ENCODE measurements at regions of chr11 and their contacts with region 1.

Region 1: GRCh38 chr11:102346748-102347461 is at the start of gene BIRC2:
- DNase-seq: peak; percentile 93 to 97
- ATAC-seq: peak; percentile 97 to 99 (median 98)
- H3K4me3 ChIP-seq: peak within 1 kb of the TSS; percentile 55 to 94 (median 86)
- H3K27ac ChIP-seq: peak within 1 kb of the TSS; percentile 93 to 99 (median 98)
- H3K4me1 ChIP-seq: peaks cover 0 to 38% (median 32%) of the 10 kb centered on the region in 9 donors
- H3K27me3 ChIP-seq: no peaks in the 10 kb centered on the region
- CTCF ChIP-seq: peak; percentile 34 to 87 (median 81)
- total RNA-seq, gene BIRC2: 25.4 to 39.7 (median 28.6) TPM

Region 2: GRCh38 chr11:101003468-101003867 is 1343.4 kb before region 1 on chr11:
- intact Hi-C with region 1: no loop called
- DNase-seq: no peak
- ATAC-seq: no peak
- H3K4me3 ChIP-seq: no peak overlapping the region
- H3K27ac ChIP-seq: no peak overlapping the region
- H3K4me1 ChIP-seq: no peaks in the 10 kb centered on the region
- H3K27me3 ChIP-seq: no peaks in the 10 kb centered on the region
- CTCF ChIP-seq: no peak

Region 3: GRCh38 chr11:102109896-102110760 is 236.8 kb before region 1 on chr11 and contains the start of gene YAP1:
- intact Hi-C with region 1: no loop called
- DNase-seq: peak; percentile 91
- ATAC-seq: peak; percentile 85 to 93 (median 90)
- H3K4me3 ChIP-seq: peak within 1 kb of the TSS; percentile 74 to 98 (median 89)
- H3K27ac ChIP-seq: peak within 1 kb of the TSS; percentile 94 to 99 (median 98)
- H3K4me1 ChIP-seq: peaks cover 0 to 39% (median 28%) of the 10 kb centered on the region in 9 donors
- H3K27me3 ChIP-seq: peaks cover 0 to 74% (median 0%) of the 10 kb centered on the region in 7 donors
- CTCF ChIP-seq: peak in 2 of 9 donors; percentile 3 to 12
- total RNA-seq, gene YAP1: 56.5 to 91.3 (median 68.7) TPM

Region 4: DNA sequence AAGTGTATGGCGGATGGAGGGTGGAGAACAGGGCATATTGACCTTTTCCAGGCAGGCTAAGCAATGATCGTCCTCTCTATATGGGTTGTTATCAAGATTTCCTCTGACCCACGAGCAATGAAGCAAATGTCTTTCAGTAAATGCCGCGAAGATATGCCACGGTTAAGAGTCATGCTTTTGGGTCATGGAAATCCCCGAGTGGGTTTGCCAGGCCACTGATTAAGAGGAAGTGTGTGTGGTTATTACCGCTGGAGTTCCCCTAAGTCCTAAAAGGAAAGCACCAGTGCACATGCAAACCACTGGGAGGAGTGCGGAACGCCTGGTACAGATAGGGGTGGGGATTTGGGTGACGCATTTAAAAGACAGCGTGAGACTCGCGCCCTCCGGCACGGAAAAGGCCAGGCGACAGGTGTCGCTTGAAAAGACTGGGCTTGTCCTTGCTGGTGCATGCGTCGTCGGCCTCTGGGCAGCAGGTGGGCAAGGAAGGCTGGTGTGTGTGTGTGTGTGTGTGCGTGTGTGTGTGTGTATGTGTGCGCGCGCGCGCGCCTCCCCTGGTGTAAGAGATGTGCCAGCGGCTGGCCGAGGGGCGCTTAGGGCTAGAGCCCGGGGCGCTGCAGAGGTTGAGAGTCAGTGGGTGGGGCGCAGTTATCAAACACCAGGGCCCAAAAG is 29.7 kb before region 1 on chr11 and contains the start of gene BIRC3:
- intact Hi-C with region 1: loop called in 1 of 10 experiments (anchors 2 kb)
- DNase-seq: peak; percentile 69 to 83
- ATAC-seq: peak; percentile 93 to 97 (median 96)
- H3K4me3 ChIP-seq: peak within 1 kb of the TSS in 9 of 10 donors; percentile 44 to 72 (median 59)
- H3K27ac ChIP-seq: peak within 1 kb of the TSS; percentile 32 to 85 (median 59)
- H3K4me1 ChIP-seq: peaks cover 0 to 69% (median 17%) of the 10 kb centered on the region in 9 donors
- H3K27me3 ChIP-seq: no peaks in the 10 kb centered on the region
- CTCF ChIP-seq: peak in 5 of 9 donors; percentile 33 to 52 (median 42)
- total RNA-seq, gene BIRC3: 1.5 to 16.5 (median 5.7) TPM

Region 5: DNA sequence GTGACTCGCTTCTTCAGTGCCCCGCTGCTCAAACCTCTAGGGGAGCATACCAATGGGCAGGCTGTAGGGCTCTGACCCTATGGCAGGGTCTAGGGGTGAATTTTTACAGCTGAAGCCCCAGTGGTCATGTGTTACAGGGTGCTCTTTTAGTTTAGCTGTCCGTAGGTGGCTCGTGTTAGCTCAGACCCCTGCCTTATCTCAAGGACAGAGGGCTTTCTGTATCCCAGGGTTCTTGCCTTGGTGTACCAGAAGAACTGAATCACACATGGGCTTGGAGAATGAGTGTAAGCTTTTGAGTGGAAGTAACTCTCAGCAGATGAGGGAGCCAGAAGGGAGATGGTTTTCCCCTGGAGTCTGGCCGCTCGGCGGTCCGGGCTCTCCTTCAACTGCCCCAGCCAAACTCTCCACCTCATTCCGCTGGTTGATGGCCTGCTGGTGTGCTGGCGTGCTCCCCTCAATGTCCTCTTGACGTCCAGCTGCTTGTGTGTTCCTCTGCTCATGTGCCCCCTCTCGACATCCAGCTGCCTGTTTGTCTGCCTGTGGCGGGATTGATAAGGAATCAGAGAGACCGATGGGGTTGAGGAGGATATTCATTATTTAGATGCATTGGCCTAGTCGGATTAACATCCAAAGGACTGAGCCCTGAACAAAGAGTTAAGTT is 37.6 kb after region 1 on chr11:
- intact Hi-C with region 1: loop called in 1 of 10 experiments (anchors 2 kb)
- DNase-seq: peak; percentile 36 to 48
- ATAC-seq: peak; percentile 73 to 89 (median 82)
- H3K4me3 ChIP-seq: no peak overlapping the region
- H3K27ac ChIP-seq: peak overlapping the region in 6 of 10 donors; percentile 6 to 47 (median 32)
- H3K4me1 ChIP-seq: peaks cover 0 to 34% (median 16%) of the 10 kb centered on the region in 9 donors
- H3K27me3 ChIP-seq: no peaks in the 10 kb centered on the region
- CTCF ChIP-seq: no peak

Region 6: DNA sequence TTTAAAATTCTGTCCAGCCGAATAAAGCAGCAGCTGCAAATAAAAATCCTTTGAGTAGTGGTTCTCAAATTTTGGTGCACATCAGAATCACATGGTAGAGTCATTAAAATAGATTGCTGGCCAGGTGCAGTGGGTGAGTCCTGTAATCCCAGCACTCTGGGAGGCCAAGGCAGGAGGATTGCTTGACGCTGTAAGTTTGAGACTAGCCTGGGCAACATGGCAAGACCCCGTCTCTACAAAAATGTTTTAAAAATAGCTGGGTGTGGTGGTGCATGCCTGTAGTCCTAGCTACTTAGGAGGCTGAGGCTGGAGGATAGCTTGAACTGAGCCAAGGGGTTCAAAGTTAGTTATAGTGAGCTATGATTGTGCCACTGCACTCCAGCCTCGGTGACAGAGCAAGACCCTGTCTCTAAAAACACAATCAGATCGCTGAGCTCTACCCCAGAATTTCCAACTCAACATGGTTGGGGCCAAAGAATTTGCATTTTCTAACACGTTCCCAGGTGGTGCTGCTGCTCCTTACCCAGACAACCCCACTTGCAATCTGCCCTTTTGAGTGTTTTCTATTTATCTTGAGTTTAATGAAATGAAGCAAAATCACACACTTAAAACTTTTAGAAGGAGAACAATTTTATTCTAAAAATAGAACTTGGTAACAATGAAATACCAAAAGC is 49.0 kb after region 1 on chr11:
- intact Hi-C with region 1: no loop called
- DNase-seq: no peak
- ATAC-seq: no peak
- H3K4me3 ChIP-seq: no peak overlapping the region
- H3K27ac ChIP-seq: no peak overlapping the region
- H3K4me1 ChIP-seq: peaks cover 0 to 11% (median 4%) of the 10 kb centered on the region in 9 donors
- H3K27me3 ChIP-seq: no peaks in the 10 kb centered on the region
- CTCF ChIP-seq: no peak

Measured in heart right ventricle (tissue), 16 donors.